WTC11 (cell line): ENCODE measurements at regions of chr11 and their contacts with region 1.

Region 1: GRCh38 chr11:17972987-17973386 is 39.9 kb downstream of the SERGEF start:
- DNase-seq: peak; percentile 79
- ATAC-seq: peak; percentile 99
- H3K4me3 Mint-ChIP-seq: no peak overlapping the region
- H3K27ac Mint-ChIP-seq: peak overlapping the region; percentile 74
- H3K4me1 Mint-ChIP-seq: 0 out of 2 replicates have a peak, but pooled peaks cover 3% of the 10 kb centered on the region
- H3K27me3 Mint-ChIP-seq: no peaks in the 10 kb centered on the region; the same call in 1 of the 2 replicates
- CTCF ChIP-seq: peak; percentile 67

Region 2: DNA sequence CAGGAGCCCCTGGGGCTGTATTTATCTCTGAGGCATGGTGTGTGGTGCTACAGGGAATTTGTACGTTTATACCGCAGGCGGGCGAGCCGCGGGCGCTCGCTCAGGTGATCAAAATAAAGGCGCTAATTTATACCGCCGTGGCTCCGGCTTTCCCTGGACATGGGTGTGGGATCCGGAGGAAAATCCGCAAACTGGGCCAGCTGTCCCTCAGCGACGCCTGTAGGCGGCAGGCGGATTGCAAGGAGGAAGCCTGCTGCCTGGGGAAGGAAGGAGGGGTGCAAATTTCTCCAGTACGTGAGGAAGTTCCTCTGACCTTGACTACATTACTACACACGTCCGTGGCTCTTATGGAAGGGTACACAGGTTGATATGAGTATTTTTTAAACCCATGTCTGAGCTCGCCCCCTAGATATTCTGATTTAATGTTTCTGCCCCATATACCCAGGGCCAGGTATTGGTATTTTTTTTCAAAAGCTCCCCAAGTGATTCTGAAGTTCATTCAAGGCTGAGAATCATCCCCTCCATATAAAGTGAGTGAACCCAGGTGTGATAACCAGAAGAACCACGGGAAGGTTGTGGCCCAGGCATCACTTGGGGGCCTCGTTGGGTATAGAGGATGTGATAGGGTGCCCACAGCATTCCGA is 250.9 kb before region 1 on chr11:
- CTCF ChIA-PET with region 1: interaction called, 11 read pairs
- POLR2A ChIA-PET with region 1: no interaction called
- DNase-seq: peak; percentile 75
- ATAC-seq: peak; percentile 12
- H3K4me3 Mint-ChIP-seq: peak overlapping the region; percentile 58
- H3K27ac Mint-ChIP-seq: no peak overlapping the region
- H3K4me1 Mint-ChIP-seq: peaks cover 11% of the 10 kb centered on the region
- H3K27me3 Mint-ChIP-seq: peaks cover 18% of the 10 kb centered on the region
- CTCF ChIP-seq: no peak

Region 3: DNA sequence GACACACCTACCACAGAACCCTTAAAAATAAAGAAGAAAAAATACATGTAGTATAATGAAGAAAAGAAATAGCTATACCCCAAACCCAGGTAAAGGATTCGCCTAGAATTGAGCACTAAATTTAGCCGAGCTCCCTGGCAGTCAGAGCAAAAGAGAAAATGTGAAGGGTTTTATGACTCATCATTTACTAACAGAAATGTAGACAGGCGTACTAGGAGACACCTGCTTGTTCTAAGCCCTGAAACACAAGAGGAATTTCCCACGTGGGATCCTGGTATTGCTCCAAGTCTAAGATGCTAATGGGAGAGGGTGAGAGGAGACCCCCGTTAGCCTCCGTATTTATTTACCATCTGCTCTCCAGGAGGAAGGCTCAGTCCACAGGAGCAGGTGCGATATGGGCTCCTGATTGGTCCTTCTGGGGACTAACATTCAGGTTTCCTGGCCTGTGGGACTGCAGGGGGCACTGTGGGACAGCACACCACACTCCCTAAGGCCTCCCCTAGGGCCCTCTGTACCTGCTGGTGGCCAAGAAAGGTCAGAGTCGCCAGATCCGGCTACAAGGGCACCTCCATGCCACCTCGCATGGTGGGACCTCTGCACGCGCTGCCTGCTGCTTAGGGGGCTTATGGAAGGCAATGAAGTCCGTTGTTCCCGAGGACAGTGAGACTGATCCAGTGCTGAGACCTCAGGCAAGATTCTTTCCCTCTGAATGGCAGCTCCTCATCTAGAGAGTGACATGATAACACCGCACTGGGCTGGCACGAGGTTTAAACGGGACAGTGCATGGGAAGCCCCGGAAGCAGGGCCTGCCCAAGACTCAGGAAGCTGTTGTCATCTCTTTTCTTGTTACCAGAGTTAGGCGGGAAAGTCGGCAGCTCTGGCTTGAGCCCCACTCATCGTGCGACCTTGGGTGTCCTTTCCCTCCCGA is 212.6 kb before region 1 on chr11:
- CTCF ChIA-PET with region 1: interaction called, 70 read pairs
- POLR2A ChIA-PET with region 1: no interaction called
- DNase-seq: peak; percentile 87
- ATAC-seq: peak; percentile 98
- H3K4me3 Mint-ChIP-seq: no peak overlapping the region
- H3K27ac Mint-ChIP-seq: no peak overlapping the region
- H3K4me1 Mint-ChIP-seq: 0 out of 2 replicates have a peak, but pooled peaks cover 4% of the 10 kb centered on the region
- H3K27me3 Mint-ChIP-seq: no peaks in the 10 kb centered on the region; the same call in 1 of the 2 replicates
- CTCF ChIP-seq: peak; percentile 28; the same call in 1 of the 2 replicates

Region 4: DNA sequence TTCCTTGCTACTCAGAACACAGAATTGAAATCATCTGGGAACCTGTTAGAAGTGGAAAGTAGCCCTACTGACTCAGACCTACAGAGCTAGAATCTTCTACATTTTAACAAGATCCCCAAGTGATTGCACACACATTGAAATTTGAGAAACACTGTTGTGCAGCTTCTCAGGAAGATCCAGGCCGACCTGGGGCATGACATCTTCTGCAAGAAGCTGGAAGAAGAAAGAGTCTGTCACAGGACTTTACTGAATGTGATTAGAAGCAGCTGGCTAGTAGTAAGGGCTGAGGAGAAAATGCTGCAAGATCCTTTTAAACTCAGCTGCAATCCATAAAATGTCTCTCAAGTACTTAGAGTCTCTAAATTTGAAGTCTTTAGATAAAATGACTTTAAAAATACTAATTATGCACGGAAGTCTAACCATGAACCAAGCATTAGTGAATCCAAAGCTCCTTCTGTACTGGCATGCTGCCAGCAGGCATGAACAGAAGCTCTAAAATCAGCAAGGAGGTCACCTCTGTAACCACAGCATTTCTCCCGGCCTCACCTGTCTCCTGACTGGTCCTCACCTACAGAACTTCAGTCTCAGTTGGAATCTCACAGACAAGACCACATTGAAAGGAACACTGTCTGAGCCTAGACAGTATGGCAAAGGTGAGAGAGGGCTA is 45.2 kb before region 1 on chr11:
- CTCF ChIA-PET with region 1: interaction called, 17 read pairs
- POLR2A ChIA-PET with region 1: no interaction called
- DNase-seq: no peak
- ATAC-seq: no peak
- H3K4me3 Mint-ChIP-seq: no peak overlapping the region
- H3K27ac Mint-ChIP-seq: peak overlapping the region; percentile 30; the same call in 1 of the 2 replicates
- H3K4me1 Mint-ChIP-seq: peaks cover 28% of the 10 kb centered on the region
- H3K27me3 Mint-ChIP-seq: no peaks in the 10 kb centered on the region
- CTCF ChIP-seq: no peak